ENCODE measurements at regions of chr6 and their contacts with region 1.

Region 1: GRCh38 chr6:91081452-91082067 is 494.7 kb upstream of the MAP3K7 start:
- DNase-seq: peak; percentile 13
- H3K4me3 ChIP-seq: no peak overlapping the region
- H3K27ac ChIP-seq: no peak overlapping the region
- H3K27me3 ChIP-seq: no peaks in the 10 kb centered on the region
- CTCF ChIP-seq: peak; percentile 74

Region 2: GRCh38 chr6:90780141-90780540 is 301.4 kb before region 1 on chr6:
- CTCF ChIA-PET with region 1: no interaction called
- POLR2A ChIA-PET with region 1: no interaction called
- DNase-seq: no peak
- H3K4me3 ChIP-seq: no peak overlapping the region
- H3K27ac ChIP-seq: no peak overlapping the region
- H3K27me3 ChIP-seq: no peaks in the 10 kb centered on the region
- CTCF ChIP-seq: no peak

Region 3: DNA sequence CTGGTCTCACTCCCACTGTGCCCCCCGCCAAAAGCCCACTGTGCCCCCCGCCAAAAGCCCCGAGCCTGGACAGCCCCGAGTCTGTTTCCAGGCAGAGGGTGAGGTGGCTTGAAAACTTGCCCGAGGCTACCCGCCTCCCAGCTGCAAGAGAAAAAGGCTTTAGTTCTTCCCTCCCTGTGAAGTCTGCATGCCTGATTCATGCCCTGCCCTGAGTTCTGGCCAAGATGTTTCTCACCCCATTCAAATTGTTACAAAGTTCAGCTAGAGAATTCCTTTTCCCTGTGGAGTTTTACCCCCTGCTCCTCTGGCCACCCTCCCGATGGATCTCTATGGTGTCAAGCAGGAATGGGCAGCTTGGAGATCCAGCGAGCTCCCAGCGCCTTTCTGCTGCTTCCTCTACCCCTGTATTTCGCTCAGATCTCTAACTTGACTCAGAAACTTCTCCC is 195.9 kb before region 1 on chr6:
- CTCF ChIA-PET with region 1: no interaction called
- POLR2A ChIA-PET with region 1: no interaction called
- DNase-seq: no peak
- H3K4me3 ChIP-seq: no peak overlapping the region
- H3K27ac ChIP-seq: no peak overlapping the region
- H3K27me3 ChIP-seq: no peaks in the 10 kb centered on the region
- CTCF ChIP-seq: no peak

Region 4: GRCh38 chr6:90947184-90948064 is 134.1 kb before region 1 on chr6:
- CTCF ChIA-PET with region 1: no interaction called
- POLR2A ChIA-PET with region 1: no interaction called
- DNase-seq: no peak
- H3K4me3 ChIP-seq: no peak overlapping the region
- H3K27ac ChIP-seq: no peak overlapping the region
- H3K27me3 ChIP-seq: no peaks in the 10 kb centered on the region
- CTCF ChIP-seq: no peak

Region 5: GRCh38 chr6:91094806-91095475 is 13.4 kb after region 1 on chr6:
- CTCF ChIA-PET with region 1: interaction called, 16 read pairs
- POLR2A ChIA-PET with region 1: no interaction called
- DNase-seq: no peak
- H3K4me3 ChIP-seq: no peak overlapping the region
- H3K27ac ChIP-seq: no peak overlapping the region
- H3K27me3 ChIP-seq: no peaks in the 10 kb centered on the region
- CTCF ChIP-seq: no peak

Measured in AG04450 (cell line).